ENCODE measurements at regions of chr3 and their contacts with region 1.

Region 1: DNA sequence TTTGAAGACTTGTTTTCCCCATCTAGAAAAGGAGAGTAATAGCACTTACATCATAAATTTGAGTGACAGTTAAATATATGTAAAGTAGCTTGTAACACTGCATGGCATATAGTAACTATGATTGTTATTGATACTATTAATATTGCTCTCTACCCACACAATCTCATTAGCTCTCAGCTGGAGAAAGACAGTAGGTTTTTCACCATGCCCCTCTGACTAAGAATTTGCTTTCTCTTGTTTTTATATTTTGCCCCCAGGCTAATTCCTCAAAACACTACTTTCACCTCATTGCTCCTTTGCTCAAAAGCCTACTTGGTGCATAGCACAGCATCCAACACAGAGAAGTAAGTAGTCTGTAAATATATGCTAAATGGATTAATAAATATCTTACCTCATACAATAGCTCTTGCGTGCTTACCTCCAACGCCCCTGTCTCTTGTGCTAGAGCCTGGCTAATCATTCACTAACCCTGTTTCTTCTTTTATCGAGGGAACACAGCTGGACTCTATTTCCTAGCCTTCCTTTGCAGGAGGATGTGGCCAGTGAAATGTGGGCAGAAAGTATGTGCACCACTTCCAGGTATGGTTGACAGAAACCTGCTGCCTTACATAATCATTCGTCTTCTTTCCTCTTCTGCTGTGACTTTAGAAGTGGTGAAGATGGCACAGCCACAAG is 190.0 kb downstream of the PLCH1 start:
- DNase-seq: peak; percentile 39
- ATAC-seq: peak; percentile 81
- H3K4me3 ChIP-seq: no peak overlapping the region
- H3K27ac ChIP-seq: no peak overlapping the region
- H3K4me1 ChIP-seq: no peaks in the 10 kb centered on the region
- H3K27me3 ChIP-seq: no peaks in the 10 kb centered on the region; a peak in 1 of 4 replicates
- CTCF ChIP-seq: no peak
- EP300 ChIP-seq: no peak; a peak in 1 of 4 replicates
- POLR2A ChIP-seq: no peak
- RAD21 ChIP-seq: no peak

Region 2: DNA sequence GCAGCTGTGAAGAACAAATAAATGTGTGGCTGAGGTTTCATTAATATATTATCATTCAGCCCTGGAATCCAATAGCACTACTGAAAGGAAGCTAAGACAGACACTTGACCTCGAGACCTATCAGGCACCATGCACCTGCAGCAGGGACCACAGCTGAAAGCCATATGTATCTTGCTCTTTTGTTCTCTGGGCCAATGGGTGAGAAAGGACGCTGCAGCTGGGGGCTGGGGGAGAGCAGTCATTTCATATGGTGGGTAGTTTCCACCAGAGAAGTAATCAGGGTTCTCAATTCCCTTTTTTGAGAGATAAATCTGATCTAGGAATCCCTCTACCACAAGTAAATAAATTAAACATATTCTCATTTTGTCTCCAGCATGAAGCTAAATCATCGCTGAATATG is 35.8 kb before region 1 on chr3:
- CTCF ChIA-PET with region 1: no interaction called
- POLR2A ChIA-PET with region 1: no interaction called
- RAD21 ChIA-PET with region 1: no interaction called
- SMC1A ChIA-PET with region 1: no interaction called
- in situ Hi-C with region 1: no loop called
- intact Hi-C with region 1: loop called (anchors 5 kb)
- DNase-seq: no peak
- ATAC-seq: peak; percentile 89
- H3K4me3 ChIP-seq: no peak overlapping the region
- H3K27ac ChIP-seq: no peak overlapping the region
- H3K4me1 ChIP-seq: no peaks in the 10 kb centered on the region
- H3K27me3 ChIP-seq: no peaks in the 10 kb centered on the region
- CTCF ChIP-seq: no peak
- EP300 ChIP-seq: no peak
- POLR2A ChIP-seq: no peak
- RAD21 ChIP-seq: no peak

Region 3: GRCh38 chr3:155535098-155535497 is 19.8 kb before region 1 on chr3:
- CTCF ChIA-PET with region 1: no interaction called
- POLR2A ChIA-PET with region 1: no interaction called
- RAD21 ChIA-PET with region 1: no interaction called
- SMC1A ChIA-PET with region 1: no interaction called
- in situ Hi-C with region 1: no loop called
- intact Hi-C with region 1: no loop called
- DNase-seq: no peak
- ATAC-seq: no peak
- H3K4me3 ChIP-seq: no peak overlapping the region
- H3K27ac ChIP-seq: no peak overlapping the region
- H3K4me1 ChIP-seq: no peaks in the 10 kb centered on the region
- H3K27me3 ChIP-seq: no peaks in the 10 kb centered on the region
- CTCF ChIP-seq: no peak
- EP300 ChIP-seq: no peak
- POLR2A ChIP-seq: no peak
- RAD21 ChIP-seq: no peak

Region 4: DNA sequence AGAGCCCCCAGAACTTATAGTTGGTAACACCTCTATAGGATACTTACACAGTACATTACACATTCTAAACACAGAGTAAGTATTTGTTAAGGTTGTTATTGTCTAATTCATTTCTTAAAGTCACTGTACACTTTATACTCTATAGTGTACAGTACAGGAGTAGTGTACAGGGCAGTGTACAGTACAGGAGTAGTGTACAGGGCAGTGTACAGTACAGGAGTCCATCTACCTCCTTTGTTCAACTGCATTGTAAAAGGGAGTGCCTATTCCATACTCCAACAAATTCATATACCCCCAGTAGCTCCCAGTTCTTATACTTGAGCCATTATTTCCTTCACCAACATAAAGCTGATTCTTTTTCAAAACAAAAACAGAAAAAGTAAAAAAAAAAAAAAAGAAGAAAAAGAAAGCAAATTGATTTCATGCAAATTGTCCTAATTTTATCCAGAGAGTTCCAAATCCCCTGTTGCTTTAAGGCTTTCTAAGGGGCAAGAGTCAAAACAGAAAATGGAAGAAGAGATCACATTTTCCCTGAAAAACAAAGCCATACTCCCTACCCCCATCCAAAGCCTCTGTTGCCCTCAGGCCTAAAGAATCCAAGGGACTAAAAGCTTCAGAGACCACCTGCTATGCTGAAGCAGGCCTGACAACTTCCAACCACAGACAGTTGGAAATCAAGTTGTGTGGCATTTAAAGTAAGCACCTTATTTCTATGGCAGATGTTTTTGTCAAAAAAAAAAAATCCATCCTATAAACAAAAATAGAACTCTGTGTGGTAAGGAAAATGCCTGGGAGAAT is 64.4 kb after region 1 on chr3:
- CTCF ChIA-PET with region 1: no interaction called
- POLR2A ChIA-PET with region 1: no interaction called
- RAD21 ChIA-PET with region 1: no interaction called
- SMC1A ChIA-PET with region 1: no interaction called
- in situ Hi-C with region 1: no loop called
- intact Hi-C with region 1: no loop called
- DNase-seq: no peak
- ATAC-seq: no peak
- H3K4me3 ChIP-seq: no peak overlapping the region
- H3K27ac ChIP-seq: no peak overlapping the region
- H3K4me1 ChIP-seq: no peaks in the 10 kb centered on the region
- H3K27me3 ChIP-seq: no peaks in the 10 kb centered on the region
- CTCF ChIP-seq: no peak
- EP300 ChIP-seq: no peak
- POLR2A ChIP-seq: no peak
- RAD21 ChIP-seq: no peak

Region 5: GRCh38 chr3:155760653-155761052 is 205.7 kb after region 1 on chr3:
- CTCF ChIA-PET with region 1: no interaction called
- POLR2A ChIA-PET with region 1: no interaction called
- RAD21 ChIA-PET with region 1: no interaction called
- SMC1A ChIA-PET with region 1: no interaction called
- in situ Hi-C with region 1: no loop called
- intact Hi-C with region 1: no loop called
- DNase-seq: no peak
- ATAC-seq: no peak
- H3K4me3 ChIP-seq: no peak overlapping the region
- H3K27ac ChIP-seq: no peak overlapping the region
- H3K4me1 ChIP-seq: no peaks in the 10 kb centered on the region
- H3K27me3 ChIP-seq: no peaks in the 10 kb centered on the region
- CTCF ChIP-seq: no peak
- EP300 ChIP-seq: no peak
- POLR2A ChIP-seq: no peak
- RAD21 ChIP-seq: no peak

Measured in GM12878 (cell line).